ENCODE measurements at regions of chr2 and their contacts with region 1.

Region 1: GRCh38 chr2:173571021-173571882 is 216.6 kb downstream of the CDCA7 start:
- DNase-seq: peak; percentile 39
- ATAC-seq: peak; percentile 53; the same call in 1 of the 2 replicates
- H3K4me3 ChIP-seq: no peak overlapping the region
- H3K27ac ChIP-seq: no peak overlapping the region
- H3K4me1 ChIP-seq: no peaks in the 10 kb centered on the region
- H3K27me3 ChIP-seq: peaks cover 5% of the 10 kb centered on the region
- CTCF ChIP-seq: peak; percentile 45
- POLR2A ChIP-seq: no peak
- RAD21 ChIP-seq: peak; percentile 59

Region 2: DNA sequence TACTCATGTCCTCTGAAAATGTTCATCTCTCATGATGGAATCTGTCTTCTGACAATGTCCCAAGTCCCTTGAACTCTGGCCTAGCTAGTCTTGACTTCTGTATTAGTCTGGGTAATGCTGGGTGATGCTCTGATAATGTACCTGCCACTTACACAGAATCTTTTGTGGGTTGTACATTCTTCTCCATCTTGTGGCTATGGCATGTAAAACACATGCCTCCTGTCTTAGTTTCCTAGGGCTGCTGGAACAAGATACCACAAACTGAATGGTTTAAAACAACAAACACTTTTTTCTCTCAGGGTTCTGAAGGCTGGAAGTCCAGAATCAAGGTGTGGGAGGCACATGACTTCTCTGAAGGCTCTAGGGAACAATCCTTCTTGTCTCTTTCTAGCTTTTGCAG is 778.6 kb before region 1 on chr2:
- CTCF ChIA-PET with region 1: no interaction called
- POLR2A ChIA-PET with region 1: no interaction called
- dilution Hi-C with region 1: no loop called
- in situ Hi-C with region 1: no loop called
- intact Hi-C with region 1: no loop called
- DNase-seq: peak; percentile 68
- ATAC-seq: peak; percentile 90
- H3K4me3 ChIP-seq: no peak overlapping the region
- H3K27ac ChIP-seq: no peak overlapping the region
- H3K4me1 ChIP-seq: peaks cover 7% of the 10 kb centered on the region
- H3K27me3 ChIP-seq: no peaks in the 10 kb centered on the region
- CTCF ChIP-seq: 0 out of 2 replicates have a peak, but pooled peaks have one; percentile 1
- POLR2A ChIP-seq: no peak
- RAD21 ChIP-seq: no peak

Region 3: GRCh38 chr2:173667417-173667816 is 96.2 kb after region 1 on chr2:
- CTCF ChIA-PET with region 1: interaction called, 3 read pairs
- POLR2A ChIA-PET with region 1: no interaction called
- dilution Hi-C with region 1: no loop called
- in situ Hi-C with region 1: no loop called
- intact Hi-C with region 1: loop called (anchors 5 kb)
- DNase-seq: no peak
- ATAC-seq: no peak
- H3K4me3 ChIP-seq: no peak overlapping the region
- H3K27ac ChIP-seq: no peak overlapping the region
- H3K4me1 ChIP-seq: peaks cover 1% of the 10 kb centered on the region; the same call in 1 of the 2 replicates
- H3K27me3 ChIP-seq: peaks cover 6% of the 10 kb centered on the region
- CTCF ChIP-seq: peak; percentile 31; the same call in 1 of the 2 replicates
- POLR2A ChIP-seq: no peak
- RAD21 ChIP-seq: peak; percentile 41

Region 4: DNA sequence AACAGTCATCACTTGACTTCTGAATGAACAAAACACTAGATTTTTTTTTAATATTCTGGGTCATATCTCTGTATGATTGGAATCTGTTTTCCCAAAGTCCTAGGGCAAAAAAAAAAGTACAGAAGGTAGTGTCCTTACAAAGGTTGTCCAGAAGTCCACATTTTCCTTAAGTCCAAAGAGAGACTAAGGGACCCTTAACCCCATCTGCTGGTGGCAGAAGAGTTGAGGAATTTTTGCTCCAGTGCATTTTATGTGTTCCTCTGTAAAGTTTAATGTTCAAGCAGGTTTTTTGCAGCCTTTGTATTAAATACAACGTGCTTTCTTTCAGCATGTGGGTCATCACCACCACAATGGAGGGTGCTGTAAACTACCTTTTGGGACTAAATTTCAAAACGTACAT is 178.1 kb after region 1 on chr2:
- CTCF ChIA-PET with region 1: no interaction called
- POLR2A ChIA-PET with region 1: no interaction called
- dilution Hi-C with region 1: no loop called
- in situ Hi-C with region 1: no loop called
- intact Hi-C with region 1: loop called (anchors 1 kb)
- DNase-seq: peak; percentile 54
- ATAC-seq: peak; percentile 46; the same call in 1 of the 2 replicates
- H3K4me3 ChIP-seq: no peak overlapping the region
- H3K27ac ChIP-seq: no peak overlapping the region
- H3K4me1 ChIP-seq: no peaks in the 10 kb centered on the region
- H3K27me3 ChIP-seq: peaks cover 2% of the 10 kb centered on the region; the same call in 1 of the 2 replicates
- CTCF ChIP-seq: peak; percentile 49
- POLR2A ChIP-seq: no peak
- RAD21 ChIP-seq: peak; percentile 58

Region 5: GRCh38 chr2:173884025-173884802 is 313.0 kb after region 1 on chr2:
- CTCF ChIA-PET with region 1: no interaction called
- POLR2A ChIA-PET with region 1: no interaction called
- dilution Hi-C with region 1: no loop called
- in situ Hi-C with region 1: no loop called
- intact Hi-C with region 1: loop called (anchors 10 kb)
- DNase-seq: peak; percentile 32
- ATAC-seq: peak; percentile 59; the same call in 1 of the 2 replicates
- H3K4me3 ChIP-seq: no peak overlapping the region
- H3K27ac ChIP-seq: no peak overlapping the region
- H3K4me1 ChIP-seq: no peaks in the 10 kb centered on the region
- H3K27me3 ChIP-seq: peaks cover 12% of the 10 kb centered on the region
- CTCF ChIP-seq: peak; percentile 53
- POLR2A ChIP-seq: no peak
- RAD21 ChIP-seq: peak; percentile 54

Region 6: GRCh38 chr2:173965329-173966025 is 394.2 kb after region 1 on chr2 and contains the start of gene SP3:
- CTCF ChIA-PET with region 1: no interaction called
- POLR2A ChIA-PET with region 1: no interaction called
- dilution Hi-C with region 1: no loop called
- in situ Hi-C with region 1: no loop called
- intact Hi-C with region 1: loop called (anchors 5 kb)
- DNase-seq: peak; percentile 97
- ATAC-seq: peak; percentile 66
- H3K4me3 ChIP-seq: peak within 1 kb of the TSS; percentile 93
- H3K27ac ChIP-seq: peak within 1 kb of the TSS; percentile 99
- H3K4me1 ChIP-seq: peaks cover 7% of the 10 kb centered on the region
- H3K27me3 ChIP-seq: no peaks in the 10 kb centered on the region
- CTCF ChIP-seq: no peak
- POLR2A ChIP-seq: no peak
- RAD21 ChIP-seq: no peak; the same call in 1 of the 2 replicates
- total RNA-seq, gene SP3: 136 and 137 TPM in 2 replicates

Region 7: DNA sequence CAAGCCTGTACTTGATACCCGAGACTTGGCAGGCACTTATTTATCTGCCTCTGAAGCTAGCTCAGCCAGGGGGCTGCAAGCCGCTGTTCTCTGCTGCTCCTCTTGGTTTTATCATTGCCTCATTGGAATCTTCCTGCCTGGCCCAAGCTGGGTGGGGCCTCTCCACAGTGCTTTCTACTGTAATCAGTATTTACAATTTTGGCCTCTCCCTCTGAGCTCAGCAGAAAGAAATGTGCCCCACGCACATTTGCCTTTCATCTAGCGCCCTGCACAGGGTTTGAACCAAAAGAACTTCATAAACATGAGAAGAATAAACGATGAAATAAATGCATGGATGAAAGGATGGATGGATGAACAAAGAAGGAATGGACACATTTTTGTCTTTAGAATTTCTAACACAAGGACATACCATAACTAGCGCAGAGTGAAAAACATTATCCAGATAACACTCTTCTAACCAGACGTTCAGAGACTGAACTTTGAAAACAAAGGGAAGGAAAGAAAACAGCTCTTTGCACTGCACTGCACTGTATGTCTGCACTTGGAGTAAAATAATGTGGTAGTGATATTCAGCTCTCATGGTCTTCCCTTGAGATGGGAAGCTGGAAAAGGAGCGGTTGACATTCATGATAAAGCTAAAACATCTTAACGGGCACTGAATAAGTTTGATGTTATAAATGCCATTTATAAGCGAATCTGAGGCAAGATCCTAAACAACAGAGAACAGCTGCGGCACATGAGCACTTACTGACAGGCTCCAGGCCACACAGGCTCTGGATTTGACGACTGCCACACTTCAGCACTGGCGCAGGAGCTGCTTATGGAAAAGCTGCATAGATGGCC is 480.7 kb after region 1 on chr2:
- CTCF ChIA-PET with region 1: no interaction called
- POLR2A ChIA-PET with region 1: no interaction called
- dilution Hi-C with region 1: no loop called
- in situ Hi-C with region 1: no loop called
- intact Hi-C with region 1: loop called (anchors 10 kb)
- DNase-seq: peak; percentile 83
- ATAC-seq: peak; percentile 95
- H3K4me3 ChIP-seq: no peak overlapping the region
- H3K27ac ChIP-seq: peak overlapping the region; percentile 58
- H3K4me1 ChIP-seq: peaks cover 18% of the 10 kb centered on the region
- H3K27me3 ChIP-seq: no peaks in the 10 kb centered on the region
- CTCF ChIP-seq: 0 out of 2 replicates have a peak, but pooled peaks have one; percentile 22
- POLR2A ChIP-seq: no peak
- RAD21 ChIP-seq: peak; percentile 25; the same call in 1 of the 2 replicates